HEK293T (cell line): ENCODE measurements at regions of chr7 and their contacts with region 1.

Region 1: DNA sequence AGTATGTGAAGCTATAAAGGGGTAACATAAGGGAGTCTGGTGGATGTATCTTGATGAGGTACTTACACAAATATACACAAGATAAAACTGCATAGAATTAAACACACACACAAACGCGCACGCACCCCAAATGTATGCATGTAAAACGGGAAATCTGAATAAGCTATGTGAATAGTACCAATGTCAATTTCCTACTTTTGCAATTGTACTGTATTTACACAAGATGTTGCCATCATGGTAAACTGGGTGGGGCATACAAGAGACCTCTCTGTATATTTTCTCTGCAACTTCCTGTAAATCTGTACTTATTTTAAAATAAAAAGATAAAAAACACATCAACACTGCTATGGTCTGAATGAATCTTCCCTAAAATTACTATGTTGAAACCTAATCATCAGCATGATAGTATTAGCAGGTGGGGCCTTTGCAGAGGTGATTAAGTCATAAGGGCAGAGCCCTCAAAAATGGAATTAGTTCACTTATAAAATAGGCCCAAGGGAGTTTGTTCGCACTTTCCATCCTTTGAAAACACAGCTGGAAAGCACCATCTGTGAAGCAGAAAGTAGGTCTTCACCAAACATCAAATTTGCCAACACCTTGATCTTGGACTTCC is 30.1 kb downstream of the TPK1 start:
- DNase-seq: no peak

Region 2: DNA sequence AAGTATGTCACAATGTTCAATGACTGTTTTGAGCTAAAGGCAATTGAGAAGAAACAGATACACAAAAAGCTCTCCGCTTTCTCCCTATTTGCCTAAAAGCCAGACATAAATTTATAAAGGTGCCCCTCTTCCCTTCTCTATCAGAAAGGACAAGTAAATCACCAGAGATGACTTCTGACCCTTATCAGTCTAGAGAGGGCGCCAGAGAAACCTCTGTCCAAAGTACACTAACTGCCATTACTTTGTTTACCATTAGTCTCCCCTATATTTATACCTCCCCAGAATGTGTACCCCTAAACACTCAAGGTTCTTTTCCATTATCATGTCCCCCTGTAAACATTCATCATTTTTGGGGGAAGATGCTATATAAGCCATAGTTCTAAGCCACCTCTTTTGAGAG is 19.2 kb before region 1 on chr7:
- CTCF ChIA-PET with region 1: interaction called, 10 read pairs
- POLR2A ChIA-PET with region 1: no interaction called
- DNase-seq: no peak

Region 3: DNA sequence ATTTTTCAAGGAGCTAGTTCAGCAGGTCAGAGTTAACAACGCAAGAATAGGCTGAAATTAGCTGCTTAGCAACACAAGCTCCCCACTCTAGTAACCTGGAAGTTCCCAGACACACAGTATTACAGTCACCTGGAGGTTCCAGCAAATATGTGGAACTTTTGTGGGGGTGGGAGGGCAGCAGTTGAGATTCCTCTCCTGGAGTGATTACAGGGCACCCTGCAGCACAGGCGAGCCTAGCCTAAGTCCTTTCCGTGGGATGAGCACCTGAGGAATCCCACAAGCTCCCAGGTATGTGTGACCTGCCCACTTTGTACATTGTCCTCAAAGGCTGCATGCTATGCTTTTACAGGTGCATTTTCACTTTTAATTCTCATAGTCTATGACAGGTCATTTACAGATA is 16.5 kb after region 1 on chr7:
- CTCF ChIA-PET with region 1: no interaction called
- POLR2A ChIA-PET with region 1: no interaction called
- DNase-seq: no peak